Ascending aorta (tissue), 2 donors: ENCODE measurements at regions of chr12 and their contacts with region 1.

Region 1: DNA sequence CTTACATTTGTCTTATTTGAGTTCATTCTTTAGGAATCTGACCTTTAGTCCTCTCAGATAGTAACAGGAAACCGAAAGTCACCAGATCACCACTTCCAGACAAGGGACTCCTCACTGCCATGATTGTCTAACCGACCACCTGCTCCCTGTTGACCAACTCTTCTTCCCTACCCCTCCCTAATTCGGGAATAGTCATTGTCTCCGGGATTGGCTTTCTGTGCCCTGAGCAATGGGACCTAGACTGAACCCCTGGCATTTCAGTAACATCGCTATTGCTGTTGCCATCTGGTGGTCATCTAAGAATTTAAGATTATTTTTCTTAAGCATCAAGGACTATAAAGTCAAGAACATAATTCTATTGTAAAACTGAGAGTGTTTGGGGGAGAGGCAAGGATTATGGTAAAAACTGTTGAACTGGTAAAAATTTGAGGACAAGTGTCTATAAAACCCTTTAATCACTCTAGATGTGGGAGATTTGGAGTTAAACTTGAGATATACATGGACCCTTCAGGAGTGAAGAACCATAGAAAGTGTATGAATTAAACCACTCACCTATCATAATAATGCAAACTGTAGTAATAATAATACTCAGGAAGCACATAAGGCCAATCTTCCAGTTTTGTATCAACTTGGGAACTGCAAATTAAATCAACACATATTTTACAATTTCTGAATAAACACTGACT is 6.3 kb downstream of the CLEC2A start:
- DNase-seq: no peak
- H3K4me3 ChIP-seq: no peak overlapping the region
- H3K27ac ChIP-seq: no peak overlapping the region
- H3K4me1 ChIP-seq: no peaks in the 10 kb centered on the region
- H3K27me3 ChIP-seq: no peaks in the 10 kb centered on the region
- CTCF ChIP-seq: peak in 2 of 3 experiments; percentile 21 to 29

Region 2: DNA sequence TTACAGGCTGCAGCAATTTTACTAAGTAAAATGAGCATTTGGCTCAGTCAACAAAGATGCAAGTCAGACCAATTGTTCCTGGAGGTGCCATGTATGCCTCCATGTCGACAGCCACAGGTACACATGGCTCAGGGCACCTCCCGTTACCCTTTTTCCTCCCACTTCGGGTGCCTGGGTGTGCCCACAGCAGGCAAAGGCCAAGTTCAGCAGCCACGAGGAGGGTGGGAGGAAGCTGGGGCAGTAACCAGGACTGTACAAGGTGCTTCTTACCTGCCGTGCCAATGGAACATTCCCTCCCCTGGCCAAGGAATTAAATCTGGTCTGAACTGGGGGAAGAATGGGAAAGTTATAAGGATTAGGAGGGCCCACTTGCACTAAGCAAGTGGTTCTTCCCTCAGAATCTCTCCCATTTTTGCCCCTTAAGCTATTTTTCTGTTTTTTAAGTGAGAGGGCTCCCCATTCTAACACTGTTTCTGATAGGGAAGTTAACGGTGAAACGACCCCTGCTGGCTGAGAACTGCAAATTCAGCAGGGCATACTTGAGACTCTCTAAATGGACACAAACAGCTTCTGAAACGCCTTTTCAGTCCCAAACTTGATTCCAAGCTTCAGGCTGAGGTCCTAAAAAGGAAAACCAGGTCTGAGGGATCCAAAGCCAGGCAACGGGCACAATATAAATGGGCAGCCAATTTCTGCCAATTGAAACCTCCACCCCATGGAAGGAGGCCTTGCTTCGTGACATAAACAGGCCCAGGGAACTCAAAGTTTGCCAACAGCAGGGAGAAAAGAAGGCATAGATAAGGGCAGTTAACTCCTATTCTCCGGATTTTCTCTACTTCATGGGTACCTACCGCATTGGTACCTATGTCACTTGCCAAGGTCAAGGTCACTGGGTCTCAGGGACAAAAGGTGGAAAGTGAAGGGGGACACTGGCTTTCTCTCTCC is 217.7 kb before region 1 on chr12:
- intact Hi-C with region 1: no loop called
- DNase-seq: no peak
- H3K4me3 ChIP-seq: no peak overlapping the region
- H3K27ac ChIP-seq: no peak overlapping the region
- H3K4me1 ChIP-seq: no peaks in the 10 kb centered on the region
- H3K27me3 ChIP-seq: no peaks in the 10 kb centered on the region
- CTCF ChIP-seq: peak; percentile 23 to 57 (median 38)

Region 3: GRCh38 chr12:9745199-9745598 is 180.7 kb before region 1 on chr12:
- intact Hi-C with region 1: loop called (anchors 2 kb)
- DNase-seq: no peak
- H3K4me3 ChIP-seq: no peak overlapping the region
- H3K27ac ChIP-seq: no peak overlapping the region
- H3K4me1 ChIP-seq: no peaks in the 10 kb centered on the region
- H3K27me3 ChIP-seq: no peaks in the 10 kb centered on the region
- CTCF ChIP-seq: no peak

Region 4: GRCh38 chr12:9750276-9751203 is 175.3 kb before region 1 on chr12:
- intact Hi-C with region 1: loop called (anchors 2 kb)
- DNase-seq: no peak
- H3K4me3 ChIP-seq: peak overlapping the region in 1 of 2 donors; percentile 13
- H3K27ac ChIP-seq: no peak overlapping the region
- H3K4me1 ChIP-seq: no peaks in the 10 kb centered on the region
- H3K27me3 ChIP-seq: no peaks in the 10 kb centered on the region
- CTCF ChIP-seq: peak; percentile 36 to 89 (median 77)

Region 5: GRCh38 chr12:10031771-10032175 is 105.9 kb after region 1 on chr12:
- intact Hi-C with region 1: no loop called
- DNase-seq: no peak
- H3K4me3 ChIP-seq: no peak overlapping the region
- H3K27ac ChIP-seq: no peak overlapping the region
- H3K4me1 ChIP-seq: no peaks in the 10 kb centered on the region
- H3K27me3 ChIP-seq: no peaks in the 10 kb centered on the region
- CTCF ChIP-seq: no peak